B cell (primary cell): ENCODE measurements at regions of chr10 and their contacts with region 1.

Region 1: DNA sequence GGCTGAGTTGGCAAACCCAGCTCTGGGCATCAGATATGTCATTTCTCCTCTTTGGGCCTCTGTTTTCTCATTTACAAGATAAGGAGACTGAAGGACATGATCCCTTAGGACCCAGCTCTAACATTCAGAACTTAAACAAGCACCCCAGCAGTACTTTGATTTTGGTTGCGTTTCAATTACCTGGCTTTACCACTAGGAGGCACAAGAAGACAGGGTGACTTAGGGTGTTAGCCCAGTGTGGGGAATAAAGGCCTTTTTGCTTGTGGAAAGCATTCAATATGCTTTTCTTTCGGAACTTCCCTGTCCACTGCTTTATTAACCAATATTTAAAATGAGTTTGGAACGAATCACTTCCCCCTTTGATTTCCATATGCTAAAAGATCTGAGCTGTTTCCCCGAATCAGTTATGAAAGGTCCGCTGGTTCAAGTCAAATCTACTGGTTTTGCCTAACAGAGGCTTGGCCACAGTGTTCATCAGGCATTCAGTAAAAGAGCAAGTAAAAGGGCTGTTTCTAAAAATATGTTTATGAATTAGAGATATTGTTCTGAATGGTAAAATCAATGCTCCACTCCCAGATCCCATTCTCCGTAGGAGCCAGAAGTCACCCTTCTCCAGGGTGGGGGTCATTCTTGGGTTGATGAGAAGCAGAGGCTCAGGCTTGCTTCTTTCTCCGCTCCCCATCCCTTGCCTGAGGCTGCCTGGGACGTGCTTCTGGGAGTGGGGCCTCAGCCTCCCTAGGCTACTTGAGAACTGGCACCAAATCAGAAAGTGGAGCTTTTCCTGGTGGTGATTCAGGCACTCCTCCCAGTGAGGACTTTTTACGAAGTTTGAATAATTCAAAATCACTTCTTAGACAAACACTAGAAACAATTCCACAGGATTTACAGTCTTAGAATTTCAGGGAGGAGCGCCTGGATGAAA is 105.5 kb downstream of the MYOF start:
- DNase-seq: peak; percentile 79
- ATAC-seq: peak; percentile 57
- H3K4me3 ChIP-seq: no peak overlapping the region
- H3K4me3 Mint-ChIP-seq: no peak overlapping the region
- H3K27ac ChIP-seq: no peak overlapping the region
- H3K27ac Mint-ChIP-seq: no peak overlapping the region
- H3K4me1 ChIP-seq: peaks cover 0 to 3% of the 10 kb centered on the region in 2 donors
- H3K4me1 Mint-ChIP-seq: peaks cover 2% of the 10 kb centered on the region
- H3K27me3 ChIP-seq: peaks cover 0 to 2% (median 0%) of the 10 kb centered on the region in 4 experiments
- H3K27me3 Mint-ChIP-seq: peaks cover 10% of the 10 kb centered on the region
- CTCF ChIP-seq: peak; percentile 98

Region 2: DNA sequence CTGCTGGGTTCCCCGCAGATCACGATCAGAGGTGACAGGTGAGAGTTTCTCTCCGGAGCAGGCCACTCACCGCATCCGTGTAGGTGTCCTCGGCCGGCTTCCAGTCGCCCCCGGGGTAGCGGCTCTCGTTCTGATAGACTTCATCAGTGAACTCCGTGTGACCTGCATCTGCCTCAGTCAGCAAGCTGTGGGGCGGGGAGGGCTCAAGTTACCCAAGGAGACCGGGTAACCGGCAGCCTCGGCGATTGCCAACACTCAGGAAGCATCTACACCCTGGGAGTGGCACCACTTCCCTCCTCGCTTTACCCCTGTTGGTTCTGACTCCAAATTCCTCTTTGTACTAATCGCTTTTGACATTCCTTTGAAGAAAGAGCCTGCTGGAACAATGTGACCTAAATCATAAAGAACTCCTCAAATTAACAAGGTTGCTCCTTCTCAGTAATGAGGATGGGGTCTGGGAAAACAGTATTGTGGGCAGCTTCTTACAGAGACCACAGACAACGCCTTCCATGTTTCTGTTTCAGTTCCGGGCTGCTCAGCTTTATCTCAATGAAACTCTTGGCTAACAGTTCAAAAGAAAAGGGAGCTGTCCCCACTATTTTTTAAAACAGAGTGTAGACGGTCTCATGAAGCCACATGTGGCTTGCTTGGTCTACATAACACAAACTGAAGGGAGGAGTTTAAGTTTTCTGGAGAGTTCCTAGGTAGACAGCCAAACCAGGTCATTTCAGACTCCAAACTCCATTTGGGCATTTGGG is 12.6 kb before region 1 on chr10:
- CTCF ChIA-PET with region 1: interaction called, 33 read pairs
- POLR2A ChIA-PET with region 1: no interaction called
- intact Hi-C with region 1: no loop called
- DNase-seq: no peak
- ATAC-seq: no peak
- H3K4me3 ChIP-seq: no peak overlapping the region
- H3K4me3 Mint-ChIP-seq: no peak overlapping the region
- H3K27ac ChIP-seq: no peak overlapping the region
- H3K27ac Mint-ChIP-seq: no peak overlapping the region
- H3K4me1 ChIP-seq: no peaks in the 10 kb centered on the region
- H3K4me1 Mint-ChIP-seq: no peaks in the 10 kb centered on the region
- H3K27me3 ChIP-seq: no peaks in the 10 kb centered on the region
- H3K27me3 Mint-ChIP-seq: peaks cover 9% of the 10 kb centered on the region
- CTCF ChIP-seq: no peak

Region 3: GRCh38 chr10:93403152-93404041 is 26.8 kb after region 1 on chr10:
- CTCF ChIA-PET with region 1: interaction called, 10 read pairs
- POLR2A ChIA-PET with region 1: no interaction called
- intact Hi-C with region 1: no loop called
- DNase-seq: no peak
- ATAC-seq: no peak
- H3K4me3 ChIP-seq: no peak overlapping the region
- H3K4me3 Mint-ChIP-seq: no peak overlapping the region
- H3K27ac ChIP-seq: no peak overlapping the region
- H3K27ac Mint-ChIP-seq: no peak overlapping the region
- H3K4me1 ChIP-seq: no peaks in the 10 kb centered on the region
- H3K4me1 Mint-ChIP-seq: no peaks in the 10 kb centered on the region
- H3K27me3 ChIP-seq: no peaks in the 10 kb centered on the region
- H3K27me3 Mint-ChIP-seq: peaks cover 10% of the 10 kb centered on the region
- CTCF ChIP-seq: no peak

Region 4: GRCh38 chr10:93503075-93503474 is 126.4 kb after region 1 on chr10:
- CTCF ChIA-PET with region 1: interaction called, 198 read pairs
- POLR2A ChIA-PET with region 1: no interaction called
- intact Hi-C with region 1: loop called (anchors 5 kb)
- DNase-seq: no peak
- ATAC-seq: no peak
- H3K4me3 ChIP-seq: no peak overlapping the region
- H3K4me3 Mint-ChIP-seq: peak overlapping the region; percentile 46
- H3K27ac ChIP-seq: no peak overlapping the region
- H3K27ac Mint-ChIP-seq: no peak overlapping the region
- H3K4me1 ChIP-seq: peaks cover 0 to 3% of the 10 kb centered on the region in 2 donors
- H3K4me1 Mint-ChIP-seq: peaks cover 6% of the 10 kb centered on the region
- H3K27me3 ChIP-seq: no peaks in the 10 kb centered on the region
- H3K27me3 Mint-ChIP-seq: no peaks in the 10 kb centered on the region
- CTCF ChIP-seq: no peak